ENCODE measurements at regions of chr3 and their contacts with region 1.

Region 1: DNA sequence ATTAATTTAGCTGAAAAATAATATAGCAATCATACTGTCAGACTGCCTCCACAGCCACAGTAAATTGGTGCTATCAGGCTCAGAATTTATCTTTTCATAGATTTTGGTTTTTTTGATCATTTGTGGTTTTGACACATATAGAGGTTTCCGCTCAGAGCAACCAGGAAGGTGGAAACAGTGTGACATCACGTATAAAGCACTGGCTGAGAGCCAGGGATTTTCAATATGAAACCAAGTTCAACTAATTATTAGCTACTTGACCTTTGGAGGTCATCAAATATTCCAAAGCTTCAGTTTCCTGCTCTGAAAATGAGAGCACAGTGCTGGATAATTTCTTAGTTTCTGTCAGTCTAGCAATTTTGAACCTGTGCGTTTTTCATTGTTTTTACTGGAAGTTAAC is 433.8 kb upstream of the SUCLG2 start:
- DNase-seq: peak; percentile 13
- H3K4me3 Mint-ChIP-seq: no peak overlapping the region
- H3K27ac Mint-ChIP-seq: peak overlapping the region; percentile 59
- H3K4me1 Mint-ChIP-seq: peaks cover 52% of the 10 kb centered on the region
- H3K27me3 Mint-ChIP-seq: no peaks in the 10 kb centered on the region

Region 2: DNA sequence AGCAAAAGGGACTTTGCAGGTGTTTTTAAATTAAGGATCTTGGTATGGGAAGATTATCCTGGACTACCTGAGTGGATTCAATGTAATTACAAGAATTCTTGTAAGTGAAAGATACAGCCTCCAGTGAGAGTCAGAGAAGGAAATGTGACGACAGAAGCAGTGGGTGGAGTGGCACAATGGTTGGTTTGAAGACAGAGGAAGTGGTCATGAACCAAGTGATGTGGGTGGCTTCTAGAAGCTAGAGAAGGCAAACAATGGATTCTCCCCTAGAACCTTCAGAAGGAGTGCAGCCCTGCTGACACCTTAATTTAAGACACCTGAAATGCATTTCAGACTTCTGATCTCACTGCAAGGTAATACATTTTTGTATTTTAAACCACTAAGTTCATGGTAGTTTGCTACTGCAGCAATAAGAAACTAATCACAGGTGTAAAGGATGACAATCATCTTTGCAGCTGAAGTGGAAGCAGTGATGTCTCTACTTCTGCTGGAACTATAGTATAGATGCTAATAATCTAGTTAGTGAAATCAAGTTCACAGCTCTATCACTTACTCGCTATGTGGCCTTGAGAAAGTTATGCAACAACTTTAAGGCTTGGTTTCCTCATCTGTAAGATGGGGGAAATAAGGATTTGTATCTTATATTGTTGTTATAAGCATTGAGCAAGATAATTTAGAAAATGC is 30.4 kb before region 1 on chr3:
- intact Hi-C with region 1: loop called (anchors 1 kb)
- DNase-seq: peak; percentile 66
- H3K4me3 Mint-ChIP-seq: peak overlapping the region; percentile 54
- H3K27ac Mint-ChIP-seq: peak overlapping the region; percentile 76
- H3K4me1 Mint-ChIP-seq: peaks cover 59% of the 10 kb centered on the region
- H3K27me3 Mint-ChIP-seq: no peaks in the 10 kb centered on the region

Region 3: GRCh38 chr3:68116580-68116979 is 28.4 kb after region 1 on chr3:
- intact Hi-C with region 1: loop called (anchors 2 kb)
- DNase-seq: no peak
- H3K4me3 Mint-ChIP-seq: no peak overlapping the region
- H3K27ac Mint-ChIP-seq: no peak overlapping the region
- H3K4me1 Mint-ChIP-seq: no peaks in the 10 kb centered on the region
- H3K27me3 Mint-ChIP-seq: no peaks in the 10 kb centered on the region

Region 4: DNA sequence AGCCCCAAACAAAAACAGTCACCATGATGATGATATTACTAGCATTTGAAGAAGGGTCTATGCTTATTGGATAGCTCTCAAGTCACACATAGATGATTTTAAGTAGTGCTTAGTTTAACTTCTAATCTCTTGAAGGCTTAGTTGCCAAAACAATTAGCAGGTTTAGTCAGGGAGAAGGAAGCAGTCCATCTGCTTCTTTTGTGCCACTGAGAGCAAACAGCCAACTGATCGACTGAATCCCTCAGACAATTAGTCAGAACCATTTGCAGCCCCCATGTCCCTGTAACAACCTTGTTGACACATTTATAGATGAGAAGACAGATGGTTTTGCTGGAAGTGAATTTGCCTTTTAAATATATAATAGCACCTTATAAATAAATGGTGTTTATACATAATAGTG is 151.3 kb after region 1 on chr3:
- intact Hi-C with region 1: no loop called
- DNase-seq: no peak
- H3K4me3 Mint-ChIP-seq: no peak overlapping the region
- H3K27ac Mint-ChIP-seq: no peak overlapping the region
- H3K4me1 Mint-ChIP-seq: no peaks in the 10 kb centered on the region
- H3K27me3 Mint-ChIP-seq: no peaks in the 10 kb centered on the region

Measured in activated T-helper 1 cell treated with anti-CD3 and anti-CD28 coated beads, Interleukin-12 subunit alpha, Interleukin-12 subunit beta, Interleukin-2, Interleukin-4 antibody, amounts not matched to agents 30 ng/mL and 10 ng/mL and 1 ng/mL, durations not matched to agents 14 hours and 24 hours and 36 hours (primary cell).